MCF 10A (cell line): ENCODE measurements at regions of chr1 and their contacts with region 1.

Region 1: GRCh38 chr1:204506961-204507387 is 9.2 kb upstream of the MDM4 start:
- DNase-seq: peak; percentile 98
- H3K4me3 Mint-ChIP-seq: peak overlapping the region; percentile 77
- H3K27ac Mint-ChIP-seq: peak overlapping the region; percentile 90
- H3K4me1 Mint-ChIP-seq: peaks cover 29% of the 10 kb centered on the region
- H3K27me3 Mint-ChIP-seq: no peaks in the 10 kb centered on the region
- CTCF ChIP-seq: no peak

Region 2: DNA sequence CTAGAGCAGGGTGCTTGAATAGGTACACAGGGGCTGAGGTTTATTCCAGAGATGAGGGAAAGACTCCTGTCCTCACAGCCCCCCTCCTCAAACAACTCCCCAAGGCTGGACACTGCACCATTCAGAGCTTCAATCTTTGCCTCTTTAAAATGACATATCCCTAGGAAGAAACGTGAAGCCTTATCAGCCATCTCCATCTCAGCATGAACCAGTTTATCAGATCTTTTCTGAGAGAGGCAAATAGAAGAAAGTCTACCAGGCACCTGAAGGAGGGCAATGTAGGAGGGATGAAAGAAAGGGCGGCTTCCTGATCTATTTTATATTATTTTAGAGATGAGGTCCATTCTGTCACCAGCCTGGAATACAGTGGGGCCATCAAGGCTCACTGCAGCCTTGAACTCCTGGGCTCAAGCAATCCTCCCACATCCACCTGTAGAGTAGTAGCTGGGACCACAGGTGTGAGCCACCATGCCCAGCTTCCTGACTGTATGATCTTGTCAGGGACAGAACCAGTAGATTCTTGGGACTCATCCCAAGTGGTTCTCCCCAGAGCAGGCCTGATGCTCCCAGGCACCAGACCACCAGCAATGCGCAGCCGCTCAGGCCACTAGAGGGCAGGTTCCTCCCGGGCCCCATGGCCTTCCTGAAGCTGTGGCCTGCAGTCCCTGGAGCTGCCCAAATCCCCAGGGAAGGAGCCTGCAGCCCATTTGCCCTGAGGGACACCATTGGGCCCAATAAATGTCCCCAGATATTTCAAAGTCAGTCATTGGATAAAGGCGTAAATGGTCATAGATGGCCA is 248.8 kb before region 1 on chr1:
- CTCF ChIA-PET with region 1: interaction called, 8 read pairs
- POLR2A ChIA-PET with region 1: no interaction called
- intact Hi-C with region 1: loop called (anchors 1 kb)
- DNase-seq: peak; percentile 80
- H3K4me3 Mint-ChIP-seq: no peak overlapping the region
- H3K27ac Mint-ChIP-seq: peak overlapping the region; percentile 49
- H3K4me1 Mint-ChIP-seq: peaks cover 13% of the 10 kb centered on the region
- H3K27me3 Mint-ChIP-seq: no peaks in the 10 kb centered on the region
- CTCF ChIP-seq: peak; percentile 97

Region 3: GRCh38 chr1:204384994-204385352 is 122.0 kb before region 1 on chr1:
- CTCF ChIA-PET with region 1: interaction called, 18 read pairs
- POLR2A ChIA-PET with region 1: interaction called, 13 read pairs
- intact Hi-C with region 1: no loop called
- DNase-seq: peak; percentile 86
- H3K4me3 Mint-ChIP-seq: no peak overlapping the region
- H3K27ac Mint-ChIP-seq: no peak overlapping the region
- H3K4me1 Mint-ChIP-seq: no peaks in the 10 kb centered on the region
- H3K27me3 Mint-ChIP-seq: no peaks in the 10 kb centered on the region
- CTCF ChIP-seq: no peak

Region 4: DNA sequence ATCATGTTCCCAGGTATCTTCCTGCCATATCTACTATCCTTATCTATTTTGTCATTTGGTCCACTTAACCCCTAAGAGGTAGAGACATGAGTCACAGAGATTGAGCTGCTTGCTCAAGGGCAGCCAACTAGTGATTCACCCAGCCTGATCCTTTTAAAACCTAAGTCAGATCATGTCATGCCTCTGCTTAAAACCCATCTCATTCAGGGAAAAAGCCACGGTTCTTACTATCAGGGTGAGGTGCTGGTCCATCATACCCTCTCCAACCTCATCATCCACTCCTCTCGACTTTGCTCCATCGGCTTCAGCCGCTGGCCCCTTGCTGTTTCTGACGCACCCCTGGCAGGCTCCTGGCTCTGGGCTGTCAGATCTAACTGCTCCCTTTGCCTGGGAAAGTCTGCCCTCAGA is 80.9 kb before region 1 on chr1:
- CTCF ChIA-PET with region 1: interaction called, 1,125 read pairs
- POLR2A ChIA-PET with region 1: interaction called, 253 read pairs
- intact Hi-C with region 1: loop called (anchors 1 kb)
- DNase-seq: peak; percentile 86
- H3K4me3 Mint-ChIP-seq: no peak overlapping the region
- H3K27ac Mint-ChIP-seq: peak overlapping the region; percentile 1
- H3K4me1 Mint-ChIP-seq: peaks cover 19% of the 10 kb centered on the region
- H3K27me3 Mint-ChIP-seq: no peaks in the 10 kb centered on the region
- CTCF ChIP-seq: no peak

Region 5: GRCh38 chr1:204487256-204487615 is 19.7 kb before region 1 on chr1:
- CTCF ChIA-PET with region 1: interaction called, 79 read pairs
- POLR2A ChIA-PET with region 1: interaction called, 104 read pairs
- intact Hi-C with region 1: no loop called
- DNase-seq: no peak
- H3K4me3 Mint-ChIP-seq: no peak overlapping the region
- H3K27ac Mint-ChIP-seq: no peak overlapping the region
- H3K4me1 Mint-ChIP-seq: peaks cover 10% of the 10 kb centered on the region
- H3K27me3 Mint-ChIP-seq: peaks cover 28% of the 10 kb centered on the region
- CTCF ChIP-seq: no peak